ENCODE measurements at regions of chr1 and their contacts with region 1.

Region 1: DNA sequence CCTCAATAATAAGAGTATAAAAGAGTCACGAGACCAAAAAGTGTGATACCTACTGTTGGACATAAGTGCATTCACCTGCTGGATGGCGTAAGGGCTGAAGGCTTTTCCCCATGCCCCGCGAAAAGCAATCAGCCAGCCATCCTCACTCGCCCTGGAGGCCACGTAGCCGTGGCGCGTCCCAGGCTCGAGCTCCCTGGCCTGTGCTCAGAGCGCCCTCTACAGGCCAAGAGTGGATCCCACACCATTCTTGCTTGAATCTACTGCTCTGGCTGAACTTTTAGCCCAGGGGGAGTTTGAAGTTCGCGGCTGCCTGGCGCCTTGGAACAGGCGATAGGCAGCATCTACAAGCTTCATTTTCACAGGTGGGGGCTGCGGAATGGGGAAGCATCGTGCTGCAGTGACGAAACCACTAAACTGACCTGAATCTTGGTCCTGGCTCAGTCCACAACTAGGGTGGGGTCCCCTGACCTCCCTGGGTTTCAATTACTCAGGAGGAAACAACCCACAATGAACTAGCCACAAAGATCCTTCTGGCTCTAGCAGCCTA is 70.3 kb upstream of the SERBP1 start:
- DNase-seq: peak; percentile 85 to 88
- H3K4me3 ChIP-seq: no peak overlapping the region
- H3K27ac ChIP-seq: no peak overlapping the region
- H3K4me1 ChIP-seq: no peaks in the 10 kb centered on the region
- H3K27me3 ChIP-seq: no peaks in the 10 kb centered on the region
- CTCF ChIP-seq: peak; percentile 90 to 97 (median 96)
- POLR2A ChIP-seq: no peak

Region 2: GRCh38 chr1:67214420-67215174 is 285.9 kb before region 1 on chr1:
- intact Hi-C with region 1: loop called (anchors 10 kb)
- DNase-seq: peak; percentile 26 to 30
- H3K4me3 ChIP-seq: no peak overlapping the region
- H3K27ac ChIP-seq: no peak overlapping the region
- H3K4me1 ChIP-seq: no peaks in the 10 kb centered on the region
- H3K27me3 ChIP-seq: no peaks in the 10 kb centered on the region
- CTCF ChIP-seq: peak in 5 of 6 experiments; percentile 18 to 53 (median 25)
- POLR2A ChIP-seq: no peak

Region 3: DNA sequence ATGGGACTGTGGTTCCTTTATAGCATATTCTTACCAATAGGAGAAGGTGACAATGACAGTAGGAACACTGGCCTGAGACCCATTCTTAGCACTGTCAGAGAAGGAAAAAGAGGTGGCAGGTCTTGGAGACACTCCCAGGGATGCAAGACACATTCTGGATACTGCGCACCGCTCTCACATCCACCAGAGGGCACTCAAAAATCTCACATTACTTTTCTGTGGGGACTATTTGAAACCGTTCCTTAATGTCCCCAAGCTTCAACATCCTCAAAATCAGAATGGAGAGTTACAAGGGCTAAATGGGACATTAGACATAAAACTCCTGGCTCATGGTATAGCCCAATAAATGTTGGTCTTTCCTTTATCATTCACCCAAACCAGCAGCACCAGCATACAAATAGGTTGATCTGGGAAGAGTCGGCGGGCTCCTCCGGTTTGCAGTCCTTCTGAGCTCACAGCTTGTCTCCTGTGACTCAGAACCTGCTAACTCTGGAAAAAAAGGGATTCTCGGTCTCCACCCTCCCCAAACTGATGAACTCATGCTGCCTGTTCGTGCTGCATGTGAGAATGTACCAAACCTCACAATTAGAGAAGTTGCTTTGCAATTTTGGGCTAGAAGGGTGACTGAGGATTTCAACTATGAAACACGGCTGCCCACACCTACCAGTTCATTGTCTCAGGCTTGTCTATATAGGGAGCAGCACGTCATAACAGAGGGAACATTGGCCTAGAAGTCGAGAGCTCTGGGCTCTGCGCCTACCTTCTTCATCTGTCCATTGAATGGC is 152.6 kb before region 1 on chr1:
- intact Hi-C with region 1: loop called (anchors 2 kb)
- DNase-seq: peak; percentile 32 to 52
- H3K4me3 ChIP-seq: no peak overlapping the region
- H3K27ac ChIP-seq: no peak overlapping the region
- H3K4me1 ChIP-seq: no peaks in the 10 kb centered on the region
- H3K27me3 ChIP-seq: no peaks in the 10 kb centered on the region
- CTCF ChIP-seq: peak; percentile 11 to 71 (median 64)
- POLR2A ChIP-seq: no peak

Measured in thyroid gland (tissue), 4 donors.